ENCODE measurements at regions of chr1 and their contacts with region 1.

Region 1: GRCh38 chr1:229661022-229661877 is 35.2 kb downstream of the URB2 start:
- DNase-seq: peak; percentile 71
- ATAC-seq: peak; percentile 83
- H3K4me3 Mint-ChIP-seq: no peak overlapping the region
- H3K27ac Mint-ChIP-seq: peak overlapping the region; percentile 17
- H3K4me1 Mint-ChIP-seq: peaks cover 10% of the 10 kb centered on the region
- H3K27me3 Mint-ChIP-seq: no peaks in the 10 kb centered on the region

Region 2: DNA sequence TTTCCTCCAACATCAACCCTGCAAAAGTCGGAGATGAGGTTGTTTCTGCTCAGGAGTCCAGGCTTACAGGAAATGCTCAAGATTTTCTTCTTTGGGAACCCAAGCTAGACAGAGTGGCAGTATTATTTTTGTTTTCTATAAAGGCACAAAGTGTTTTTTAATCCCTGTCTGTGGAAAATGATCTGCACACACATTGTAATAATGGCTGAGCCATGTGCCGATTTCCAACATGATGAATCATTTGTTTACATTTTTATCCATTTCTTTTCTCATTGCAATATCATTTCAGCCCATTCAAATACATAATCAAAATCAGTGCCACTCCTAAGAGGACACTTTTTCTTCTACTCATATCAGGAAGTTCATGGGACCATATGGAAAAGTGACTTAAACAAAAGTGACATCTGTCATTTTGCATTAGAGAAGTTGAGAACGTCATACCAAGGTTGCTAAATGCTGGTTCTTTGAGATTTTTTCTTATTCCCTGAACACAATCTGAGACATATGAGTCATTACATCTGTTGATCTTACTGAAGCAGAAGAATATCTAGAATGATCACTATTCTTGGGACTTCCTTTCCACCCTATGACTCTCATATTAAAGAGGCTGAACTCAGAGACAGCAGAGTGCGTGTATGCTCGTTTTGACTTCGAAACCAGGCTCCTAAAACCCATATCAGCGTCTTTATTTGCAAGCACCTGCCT is 272.2 kb before region 1 on chr1:
- CTCF ChIA-PET with region 1: no interaction called
- POLR2A ChIA-PET with region 1: no interaction called
- DNase-seq: no peak
- ATAC-seq: no peak
- H3K4me3 Mint-ChIP-seq: no peak overlapping the region
- H3K27ac Mint-ChIP-seq: no peak overlapping the region
- H3K4me1 Mint-ChIP-seq: no peaks in the 10 kb centered on the region
- H3K27me3 Mint-ChIP-seq: peaks cover 25% of the 10 kb centered on the region

Region 3: GRCh38 chr1:229495782-229496181 is 165.5 kb before region 1 on chr1:
- CTCF ChIA-PET with region 1: no interaction called
- POLR2A ChIA-PET with region 1: no interaction called
- DNase-seq: no peak
- ATAC-seq: no peak
- H3K4me3 Mint-ChIP-seq: no peak overlapping the region
- H3K27ac Mint-ChIP-seq: no peak overlapping the region
- H3K4me1 Mint-ChIP-seq: no peaks in the 10 kb centered on the region
- H3K27me3 Mint-ChIP-seq: no peaks in the 10 kb centered on the region

Region 4: GRCh38 chr1:229650045-229650444 is 11.2 kb before region 1 on chr1:
- CTCF ChIA-PET with region 1: interaction called, 11 read pairs
- POLR2A ChIA-PET with region 1: no interaction called
- DNase-seq: no peak
- ATAC-seq: no peak
- H3K4me3 Mint-ChIP-seq: no peak overlapping the region
- H3K27ac Mint-ChIP-seq: no peak overlapping the region
- H3K4me1 Mint-ChIP-seq: no peaks in the 10 kb centered on the region
- H3K27me3 Mint-ChIP-seq: no peaks in the 10 kb centered on the region

Region 5: DNA sequence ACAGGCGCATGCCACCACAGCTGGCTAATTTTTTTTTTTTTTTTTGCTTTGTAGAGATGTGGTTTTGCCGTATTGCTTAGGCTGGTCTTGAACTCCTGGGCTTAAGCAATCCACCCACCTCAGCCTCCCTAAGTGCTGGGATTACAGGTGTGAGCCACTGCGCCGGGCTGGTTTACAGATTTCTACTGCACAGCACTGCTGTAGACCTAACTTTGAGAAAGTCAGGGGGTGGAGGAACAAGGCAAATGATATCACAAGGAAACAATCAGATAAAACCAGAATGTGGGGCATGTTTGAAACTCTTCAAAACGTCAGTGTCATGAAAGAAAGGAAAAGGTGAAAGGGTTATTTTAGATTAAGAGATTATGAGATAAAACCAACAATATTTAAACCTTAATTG is 10.1 kb after region 1 on chr1:
- CTCF ChIA-PET with region 1: interaction called, 18 read pairs
- POLR2A ChIA-PET with region 1: no interaction called
- DNase-seq: no peak
- ATAC-seq: no peak
- H3K4me3 Mint-ChIP-seq: no peak overlapping the region
- H3K27ac Mint-ChIP-seq: no peak overlapping the region
- H3K4me1 Mint-ChIP-seq: peaks cover 11% of the 10 kb centered on the region
- H3K27me3 Mint-ChIP-seq: no peaks in the 10 kb centered on the region

Region 6: GRCh38 chr1:230167419-230167852 is 506.2 kb after region 1 on chr1:
- CTCF ChIA-PET with region 1: interaction called, 20 read pairs
- POLR2A ChIA-PET with region 1: no interaction called
- DNase-seq: peak; percentile 52
- ATAC-seq: peak; percentile 78
- H3K4me3 Mint-ChIP-seq: no peak overlapping the region
- H3K27ac Mint-ChIP-seq: no peak overlapping the region
- H3K4me1 Mint-ChIP-seq: peaks cover 26% of the 10 kb centered on the region
- H3K27me3 Mint-ChIP-seq: no peaks in the 10 kb centered on the region

Region 7: DNA sequence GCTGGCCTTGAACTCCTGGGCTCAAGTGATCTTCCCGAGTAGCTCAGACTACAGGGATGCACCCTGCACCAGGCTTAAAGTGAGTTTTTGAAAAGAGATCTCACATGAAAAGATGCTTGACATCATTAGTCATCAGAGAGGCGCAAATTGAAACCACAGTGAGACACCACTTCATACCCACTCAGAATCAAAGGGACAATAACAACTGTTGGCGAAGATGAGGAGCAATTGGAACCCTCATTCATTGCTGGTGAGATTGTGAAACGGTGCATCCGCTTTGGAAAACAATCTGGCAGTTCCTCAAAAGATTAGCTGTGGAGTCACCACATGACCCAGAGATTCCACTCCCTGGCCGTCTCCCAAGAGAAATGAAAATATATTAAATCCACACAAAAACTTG is 642.6 kb after region 1 on chr1:
- CTCF ChIA-PET with region 1: interaction called, 24 read pairs
- POLR2A ChIA-PET with region 1: no interaction called
- DNase-seq: no peak
- ATAC-seq: no peak
- H3K4me3 Mint-ChIP-seq: no peak overlapping the region
- H3K27ac Mint-ChIP-seq: no peak overlapping the region
- H3K4me1 Mint-ChIP-seq: peaks cover 13% of the 10 kb centered on the region
- H3K27me3 Mint-ChIP-seq: no peaks in the 10 kb centered on the region

Measured in activated CD8-positive, alpha-beta T cell treated with anti-CD3 and anti-CD28 coated beads, Interleukin-2, amount 10 ng/mL, durations not matched to agents 7 days and 5 days (primary cell).